MCF 10A (cell line): ENCODE measurements at regions of chr18 and their contacts with region 1.

Region 1: DNA sequence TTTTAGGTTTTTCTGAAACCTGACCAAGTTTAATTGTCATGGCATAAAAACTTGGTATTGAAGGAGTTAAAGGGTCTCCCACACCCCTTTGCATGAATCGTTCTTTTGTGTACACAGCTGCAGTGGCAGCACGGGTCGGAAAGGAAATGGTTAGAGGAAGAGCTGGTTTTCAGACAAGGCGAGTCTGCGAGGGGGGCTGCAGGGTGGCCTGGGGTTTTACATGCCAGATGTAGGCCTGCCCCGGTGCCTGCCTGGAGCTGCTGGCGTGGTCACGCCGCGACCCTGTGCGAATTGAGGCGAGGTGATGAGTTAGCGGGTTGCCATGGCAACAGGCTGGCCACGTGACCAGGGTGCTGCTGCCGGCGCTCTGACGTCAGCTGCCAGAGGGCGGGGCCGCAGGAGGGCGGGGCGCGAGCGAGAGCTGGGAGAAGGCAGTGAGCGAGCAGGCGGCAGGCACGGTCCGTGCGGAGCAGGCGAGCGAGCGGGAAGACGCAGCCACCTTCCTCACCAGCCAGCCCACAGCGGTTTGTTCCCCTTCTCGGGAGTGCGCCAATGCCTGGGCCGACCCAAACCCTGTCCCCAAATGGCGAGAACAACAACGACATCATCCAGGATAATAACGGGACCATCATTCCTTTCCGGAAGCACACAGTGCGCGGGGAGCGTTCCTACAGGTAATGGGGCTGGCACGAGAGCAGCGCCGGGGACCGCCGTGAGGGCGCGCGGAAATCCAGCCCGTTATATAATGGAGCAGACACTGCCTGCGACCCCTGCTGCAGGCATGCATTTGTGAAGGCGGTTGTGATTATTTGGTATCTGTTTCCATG is at the start of gene MAPRE2:
- DNase-seq: peak; percentile 96
- H3K4me3 Mint-ChIP-seq: peak within 1 kb of the TSS; percentile 90
- H3K27ac Mint-ChIP-seq: peak within 1 kb of the TSS; percentile 49
- H3K4me1 Mint-ChIP-seq: peaks cover 7% of the 10 kb centered on the region
- H3K27me3 Mint-ChIP-seq: no peaks in the 10 kb centered on the region
- CTCF ChIP-seq: no peak
- total RNA-seq, gene MAPRE2: 7.0 and 7.7 TPM in 2 replicates

Region 2: DNA sequence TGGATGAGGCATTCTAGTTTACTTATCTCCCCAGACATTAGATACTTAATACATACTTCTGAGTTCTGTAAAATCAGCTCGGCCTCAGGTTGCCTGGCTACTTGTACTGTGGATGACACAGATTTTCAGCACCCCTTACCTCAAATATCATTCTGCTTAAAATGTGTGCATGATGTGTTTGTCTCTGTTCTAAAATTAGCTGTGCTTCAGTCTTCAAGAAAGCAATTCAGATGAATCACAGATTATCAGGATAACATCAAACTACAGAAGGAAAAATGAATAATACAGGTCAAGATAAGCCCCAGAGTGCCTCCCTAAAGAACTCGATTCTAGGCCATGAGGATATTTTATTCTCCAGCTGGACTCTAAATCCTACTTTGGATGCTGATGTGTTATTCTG is 21.3 kb before region 1 on chr18:
- CTCF ChIA-PET with region 1: interaction called, 3 read pairs
- POLR2A ChIA-PET with region 1: interaction called, 11 read pairs
- intact Hi-C with region 1: no loop called
- DNase-seq: no peak
- H3K4me3 Mint-ChIP-seq: no peak overlapping the region
- H3K27ac Mint-ChIP-seq: no peak overlapping the region
- H3K4me1 Mint-ChIP-seq: no peaks in the 10 kb centered on the region
- H3K27me3 Mint-ChIP-seq: peaks cover 31% of the 10 kb centered on the region
- CTCF ChIP-seq: no peak

Region 3: GRCh38 chr18:35029770-35030169 is 11.4 kb before region 1 on chr18:
- CTCF ChIA-PET with region 1: interaction called, 5 read pairs
- POLR2A ChIA-PET with region 1: interaction called, 14 read pairs
- intact Hi-C with region 1: no loop called
- DNase-seq: no peak
- H3K4me3 Mint-ChIP-seq: no peak overlapping the region
- H3K27ac Mint-ChIP-seq: peak overlapping the region; percentile 20
- H3K4me1 Mint-ChIP-seq: peaks cover 6% of the 10 kb centered on the region
- H3K27me3 Mint-ChIP-seq: no peaks in the 10 kb centered on the region
- CTCF ChIP-seq: no peak